ENCODE measurements at regions of chr2 and their contacts with region 1.

Region 1: GRCh38 chr2:95076784-95077529 is 44.7 kb downstream of the MRPS5 start:
- DNase-seq: peak; percentile 96
- ATAC-seq: peak; percentile 77
- H3K4me3 Mint-ChIP-seq: peak overlapping the region; percentile 69
- H3K27ac Mint-ChIP-seq: peak overlapping the region; percentile 78
- H3K4me1 Mint-ChIP-seq: peaks cover 71% of the 10 kb centered on the region
- H3K27me3 Mint-ChIP-seq: no peaks in the 10 kb centered on the region

Region 2: DNA sequence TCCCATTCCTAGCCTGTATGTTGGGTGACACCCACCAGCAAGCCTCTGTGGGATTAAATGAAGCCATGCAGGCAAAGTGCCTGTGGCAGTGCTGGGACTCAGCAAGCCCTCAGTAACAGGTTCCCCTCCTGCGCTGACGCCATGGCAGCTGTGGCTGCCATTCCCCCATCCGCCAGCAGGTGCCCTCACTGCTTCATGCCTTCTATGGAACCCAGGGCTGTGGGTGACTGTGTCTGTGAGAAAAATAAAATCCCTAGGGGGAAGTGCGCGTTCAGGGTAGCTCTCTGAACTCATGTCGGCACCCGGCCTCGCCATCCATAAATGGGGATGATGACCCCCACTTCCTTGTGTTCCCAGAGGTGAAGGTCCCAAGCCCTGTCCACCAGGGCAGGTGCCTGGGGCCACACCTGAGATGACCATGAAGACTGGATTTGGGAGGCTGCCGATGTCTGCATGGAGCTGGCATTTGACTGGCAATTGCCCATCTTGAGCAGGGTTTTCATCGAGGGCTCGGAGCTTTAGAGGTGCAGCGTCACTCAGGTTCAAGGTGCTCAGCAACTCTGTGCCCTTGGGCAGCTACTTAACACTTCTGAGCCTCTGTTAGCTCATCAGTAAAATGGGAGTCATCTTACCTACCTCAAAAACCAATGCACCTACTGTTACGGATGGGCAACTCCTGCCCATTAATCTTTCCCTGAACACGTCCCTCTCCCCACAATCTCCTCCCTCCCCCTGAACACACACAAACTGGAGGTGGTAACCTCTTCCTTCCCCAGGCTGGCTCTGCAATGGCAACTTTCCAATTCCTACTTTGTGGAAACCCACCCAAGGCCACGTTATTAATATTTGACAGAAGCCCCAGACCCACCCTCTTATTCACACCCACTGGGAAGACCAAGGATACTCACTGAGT is 54.4 kb before region 1 on chr2:
- CTCF ChIA-PET with region 1: interaction called, 291 read pairs
- POLR2A ChIA-PET with region 1: interaction called, 11 read pairs
- intact Hi-C with region 1: loop called (anchors 1 kb)
- DNase-seq: peak; percentile 92
- ATAC-seq: peak; percentile 69
- H3K4me3 Mint-ChIP-seq: no peak overlapping the region
- H3K27ac Mint-ChIP-seq: peak overlapping the region; percentile 13
- H3K4me1 Mint-ChIP-seq: peaks cover 42% of the 10 kb centered on the region
- H3K27me3 Mint-ChIP-seq: no peaks in the 10 kb centered on the region

Region 3: GRCh38 chr2:95043300-95044093 is 33.5 kb before region 1 on chr2:
- CTCF ChIA-PET with region 1: interaction called, 17 read pairs
- POLR2A ChIA-PET with region 1: no interaction called
- intact Hi-C with region 1: loop called (anchors 2 to 5 kb)
- DNase-seq: peak; percentile 81
- ATAC-seq: peak; percentile 73
- H3K4me3 Mint-ChIP-seq: no peak overlapping the region
- H3K27ac Mint-ChIP-seq: no peak overlapping the region
- H3K4me1 Mint-ChIP-seq: peaks cover 63% of the 10 kb centered on the region
- H3K27me3 Mint-ChIP-seq: no peaks in the 10 kb centered on the region

Region 4: GRCh38 chr2:95062242-95063085 is 14.5 kb before region 1 on chr2:
- CTCF ChIA-PET with region 1: interaction called, 64 read pairs
- POLR2A ChIA-PET with region 1: no interaction called
- intact Hi-C with region 1: loop called in 1 of 2 experiments (anchors 1 kb)
- DNase-seq: no peak
- ATAC-seq: peak; percentile 24
- H3K4me3 Mint-ChIP-seq: no peak overlapping the region
- H3K27ac Mint-ChIP-seq: peak overlapping the region; percentile 74
- H3K4me1 Mint-ChIP-seq: peaks cover 27% of the 10 kb centered on the region
- H3K27me3 Mint-ChIP-seq: no peaks in the 10 kb centered on the region

Region 5: GRCh38 chr2:95115418-95115817 is 38.5 kb after region 1 on chr2:
- CTCF ChIA-PET with region 1: interaction called, 49 read pairs
- POLR2A ChIA-PET with region 1: no interaction called
- intact Hi-C with region 1: loop called (anchors 1 to 2 kb)
- DNase-seq: peak; percentile 85
- ATAC-seq: peak; percentile 98
- H3K4me3 Mint-ChIP-seq: no peak overlapping the region
- H3K27ac Mint-ChIP-seq: no peak overlapping the region
- H3K4me1 Mint-ChIP-seq: peaks cover 39% of the 10 kb centered on the region
- H3K27me3 Mint-ChIP-seq: no peaks in the 10 kb centered on the region

Region 6: GRCh38 chr2:95159690-95160449 is 82.9 kb after region 1 on chr2 and contains the start of gene ZNF514:
- CTCF ChIA-PET with region 1: interaction called, 6 read pairs
- POLR2A ChIA-PET with region 1: no interaction called
- intact Hi-C with region 1: loop called (anchors 2 to 5 kb)
- DNase-seq: peak; percentile 85
- ATAC-seq: peak; percentile 95
- H3K4me3 Mint-ChIP-seq: peak within 1 kb of the TSS; percentile 81
- H3K27ac Mint-ChIP-seq: peak within 1 kb of the TSS; percentile 80
- H3K4me1 Mint-ChIP-seq: peaks cover 15% of the 10 kb centered on the region
- H3K27me3 Mint-ChIP-seq: no peaks in the 10 kb centered on the region
- total RNA-seq, gene ZNF514: 7.0 to 8.8 TPM

Region 7: DNA sequence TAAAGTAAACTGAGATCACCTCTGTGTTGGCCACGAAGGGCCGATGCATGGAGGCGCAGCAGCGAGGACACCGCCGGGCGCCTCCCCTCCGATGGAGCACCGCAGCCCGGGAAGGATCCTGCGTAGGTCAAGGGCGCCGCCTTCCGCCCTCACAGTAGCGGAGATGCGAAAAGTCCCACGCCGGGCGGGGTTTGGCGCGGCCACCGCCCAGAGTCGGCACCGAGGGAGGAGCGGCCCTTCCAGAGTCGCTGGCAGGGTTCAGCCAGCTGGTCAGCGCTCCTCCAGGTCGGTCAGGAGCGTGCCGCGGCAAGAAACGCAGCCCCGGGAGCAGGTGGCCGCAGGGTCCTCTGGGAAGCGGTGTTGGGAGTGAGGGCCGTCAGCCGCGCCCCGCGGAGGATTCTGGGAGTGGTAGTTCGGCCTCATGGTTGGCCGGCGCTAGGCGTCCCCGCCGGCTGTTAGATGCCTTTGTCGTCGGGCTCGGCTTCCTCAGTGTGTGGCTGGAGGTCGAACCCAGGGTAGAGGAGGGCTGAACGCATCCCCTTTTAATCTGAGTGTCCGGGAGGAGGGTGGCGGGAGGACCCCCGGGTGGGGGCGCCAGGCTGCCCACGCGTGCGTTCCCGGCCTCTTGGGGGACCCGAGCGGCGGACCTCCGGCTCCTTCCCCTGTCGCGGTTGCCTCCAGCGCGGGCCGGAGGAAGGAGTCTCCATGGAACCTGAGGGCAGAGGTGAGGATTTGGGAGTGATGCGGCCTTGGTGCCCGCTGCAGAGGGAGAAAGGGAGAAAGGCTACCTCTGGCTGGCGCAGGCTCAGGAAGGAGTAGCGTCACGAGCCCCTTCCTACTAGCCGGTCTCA is 130.4 kb after region 1 on chr2 and contains the start of gene ZNF892:
- CTCF ChIA-PET with region 1: no interaction called
- POLR2A ChIA-PET with region 1: no interaction called
- intact Hi-C with region 1: loop called in 1 of 2 experiments (anchors 1 kb)
- DNase-seq: peak; percentile 91
- ATAC-seq: peak; percentile 98
- H3K4me3 Mint-ChIP-seq: peak within 1 kb of the TSS; percentile 87
- H3K27ac Mint-ChIP-seq: peak within 1 kb of the TSS; percentile 68
- H3K4me1 Mint-ChIP-seq: peaks cover 17% of the 10 kb centered on the region
- H3K27me3 Mint-ChIP-seq: no peaks in the 10 kb centered on the region
- total RNA-seq, gene ZNF892: 3.2 to 3.8 TPM

Region 8: GRCh38 chr2:96427917-96428316 is 1351.0 kb after region 1 on chr2:
- CTCF ChIA-PET with region 1: no interaction called
- POLR2A ChIA-PET with region 1: no interaction called
- intact Hi-C with region 1: no loop called
- DNase-seq: peak; percentile 58
- ATAC-seq: peak; percentile 100
- H3K4me3 Mint-ChIP-seq: no peak overlapping the region
- H3K27ac Mint-ChIP-seq: peak overlapping the region; percentile 64
- H3K4me1 Mint-ChIP-seq: peaks cover 10% of the 10 kb centered on the region
- H3K27me3 Mint-ChIP-seq: peaks cover 7% of the 10 kb centered on the region